ENCODE measurements at regions of chr10 and their contacts with region 1.

Region 1: GRCh38 chr10:22228943-22229801 is 11.4 kb upstream of the EBLN1 start:
- DNase-seq: peak; percentile 81 to 94
- ATAC-seq: peak; percentile 93 to 97
- H3K4me3 ChIP-seq: peak overlapping the region; percentile 64
- H3K27ac ChIP-seq: peak overlapping the region; percentile 78 to 88
- H3K4me1 ChIP-seq: peaks cover 6% of the 10 kb centered on the region; the same call in 2 of the 3 replicates
- CTCF ChIP-seq: no peak
- EP300 ChIP-seq: no peak
- POLR2A ChIP-seq: peak; percentile 29; the same call in 1 of the 2 replicates
- RAD21 ChIP-seq: peak in 1 of 2 experiments; percentile 18; a peak in 2 of 5 replicates

Region 2: GRCh38 chr10:22003079-22003913 is 225.9 kb before region 1 on chr10 and contains the start of gene DNAJC1:
- CTCF ChIA-PET with region 1: interaction called, 3 read pairs
- POLR2A ChIA-PET with region 1: interaction called, 15 read pairs
- DNase-seq: peak; percentile 91 to 96
- ATAC-seq: peak; percentile 95 to 99
- H3K4me3 ChIP-seq: peak within 1 kb of the TSS; percentile 76
- H3K27ac ChIP-seq: peak within 1 kb of the TSS; percentile 77 to 91
- H3K4me1 ChIP-seq: peaks cover 11% of the 10 kb centered on the region; the same call in 1 of the 3 replicates
- CTCF ChIP-seq: no peak
- EP300 ChIP-seq: no peak
- POLR2A ChIP-seq: peak; percentile 70
- RAD21 ChIP-seq: no peak; a peak in 1 of 5 replicates
- polyA plus RNA-seq, gene DNAJC1: 29.8 and 34.2 TPM in 2 replicates

Region 3: GRCh38 chr10:22148961-22149360 is 80.2 kb before region 1 on chr10:
- CTCF ChIA-PET with region 1: no interaction called
- POLR2A ChIA-PET with region 1: no interaction called
- DNase-seq: no peak
- ATAC-seq: no peak
- H3K4me3 ChIP-seq: no peak overlapping the region
- H3K27ac ChIP-seq: no peak overlapping the region
- H3K4me1 ChIP-seq: no peaks in the 10 kb centered on the region
- CTCF ChIP-seq: no peak
- EP300 ChIP-seq: no peak
- POLR2A ChIP-seq: no peak
- RAD21 ChIP-seq: no peak

Region 4: DNA sequence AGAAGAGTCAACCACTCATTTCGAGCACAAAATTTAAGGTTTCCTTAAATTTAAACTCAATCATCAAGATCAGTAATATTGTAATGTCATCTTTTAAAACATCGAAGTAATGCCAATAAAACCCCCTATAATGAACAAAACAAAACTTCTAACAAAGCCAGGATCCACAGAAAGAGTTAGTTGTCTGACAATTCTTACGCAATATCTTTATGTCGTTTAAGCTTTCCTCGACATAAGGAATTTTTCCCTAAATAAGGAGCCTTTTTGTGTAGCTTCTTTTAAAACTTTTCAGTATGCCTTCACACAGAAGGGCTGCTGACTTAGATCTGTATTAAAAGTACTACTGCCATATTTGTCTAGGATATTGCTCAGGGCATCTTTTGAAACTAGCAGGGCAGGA is 18.9 kb before region 1 on chr10:
- CTCF ChIA-PET with region 1: no interaction called
- POLR2A ChIA-PET with region 1: no interaction called
- DNase-seq: no peak
- ATAC-seq: no peak
- H3K4me3 ChIP-seq: no peak overlapping the region
- H3K27ac ChIP-seq: no peak overlapping the region
- H3K4me1 ChIP-seq: no peaks in the 10 kb centered on the region
- CTCF ChIP-seq: no peak
- EP300 ChIP-seq: no peak
- POLR2A ChIP-seq: no peak
- RAD21 ChIP-seq: no peak

Region 5: GRCh38 chr10:22244001-22244400 is 14.8 kb after region 1 on chr10:
- CTCF ChIA-PET with region 1: interaction called, 20 read pairs
- POLR2A ChIA-PET with region 1: interaction called, 22 read pairs
- DNase-seq: no peak
- ATAC-seq: no peak
- H3K4me3 ChIP-seq: no peak overlapping the region
- H3K27ac ChIP-seq: peak overlapping the region; percentile 18 to 89; a peak in 4 of 6 replicates
- H3K4me1 ChIP-seq: peaks cover 44% of the 10 kb centered on the region
- CTCF ChIP-seq: peak; percentile 20; the same call in 2 of the 3 replicates
- EP300 ChIP-seq: no peak
- POLR2A ChIP-seq: no peak
- RAD21 ChIP-seq: no peak

Region 6: DNA sequence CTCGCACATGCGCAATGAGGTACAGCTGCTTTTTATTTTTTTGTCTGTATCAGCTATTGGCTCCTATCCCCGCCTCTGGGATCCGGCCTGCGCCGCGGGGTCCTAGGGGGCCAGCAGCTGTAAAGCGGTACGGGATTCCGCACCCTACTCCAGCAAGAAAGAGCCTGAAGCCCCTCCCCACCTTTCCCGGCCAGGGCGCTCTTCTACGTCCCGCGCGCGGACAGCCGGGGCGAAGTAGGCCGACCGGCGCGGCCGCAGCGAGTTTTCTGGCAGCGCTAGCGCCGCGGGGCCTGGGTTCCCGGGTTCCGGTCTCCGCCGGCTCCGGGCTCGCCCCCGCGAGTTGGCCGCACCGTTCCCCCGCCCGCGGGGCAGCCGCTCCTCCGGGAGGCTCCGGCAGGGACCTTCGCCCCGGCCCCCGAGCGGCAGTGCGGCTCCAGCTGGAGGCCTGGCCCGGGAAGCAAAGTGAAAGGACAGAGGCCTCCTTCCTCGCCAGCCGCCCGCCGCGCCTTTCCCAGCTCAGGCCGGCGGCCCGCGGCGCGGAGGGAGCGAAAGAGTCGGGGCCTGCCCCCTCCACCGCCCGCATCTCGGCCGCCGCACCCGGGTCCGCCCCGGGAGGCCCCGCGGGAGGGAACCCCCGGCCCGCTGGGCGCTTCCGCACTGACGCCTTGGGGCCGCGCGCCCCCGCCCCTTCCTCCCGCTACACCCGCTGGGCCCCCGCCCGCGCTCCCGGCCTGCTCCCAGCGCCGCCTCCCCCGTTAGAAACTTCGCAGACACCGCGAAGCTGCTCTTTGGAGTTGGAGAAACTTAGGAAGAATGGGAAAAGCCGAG is 111.4 kb after region 1 on chr10:
- CTCF ChIA-PET with region 1: no interaction called
- POLR2A ChIA-PET with region 1: interaction called, 21 read pairs
- DNase-seq: peak; percentile 76 to 85
- ATAC-seq: peak; percentile 79 to 81
- H3K4me3 ChIP-seq: peak overlapping the region; percentile 73
- H3K27ac ChIP-seq: peak overlapping the region; percentile 92 to 99
- H3K4me1 ChIP-seq: peaks cover 15% of the 10 kb centered on the region; the same call in 1 of the 3 replicates
- CTCF ChIP-seq: 0 out of 3 replicates have a peak, but pooled peaks have one; percentile 2
- EP300 ChIP-seq: no peak
- POLR2A ChIP-seq: peak; percentile 40
- RAD21 ChIP-seq: no peak; a peak in 1 of 5 replicates

Region 7: DNA sequence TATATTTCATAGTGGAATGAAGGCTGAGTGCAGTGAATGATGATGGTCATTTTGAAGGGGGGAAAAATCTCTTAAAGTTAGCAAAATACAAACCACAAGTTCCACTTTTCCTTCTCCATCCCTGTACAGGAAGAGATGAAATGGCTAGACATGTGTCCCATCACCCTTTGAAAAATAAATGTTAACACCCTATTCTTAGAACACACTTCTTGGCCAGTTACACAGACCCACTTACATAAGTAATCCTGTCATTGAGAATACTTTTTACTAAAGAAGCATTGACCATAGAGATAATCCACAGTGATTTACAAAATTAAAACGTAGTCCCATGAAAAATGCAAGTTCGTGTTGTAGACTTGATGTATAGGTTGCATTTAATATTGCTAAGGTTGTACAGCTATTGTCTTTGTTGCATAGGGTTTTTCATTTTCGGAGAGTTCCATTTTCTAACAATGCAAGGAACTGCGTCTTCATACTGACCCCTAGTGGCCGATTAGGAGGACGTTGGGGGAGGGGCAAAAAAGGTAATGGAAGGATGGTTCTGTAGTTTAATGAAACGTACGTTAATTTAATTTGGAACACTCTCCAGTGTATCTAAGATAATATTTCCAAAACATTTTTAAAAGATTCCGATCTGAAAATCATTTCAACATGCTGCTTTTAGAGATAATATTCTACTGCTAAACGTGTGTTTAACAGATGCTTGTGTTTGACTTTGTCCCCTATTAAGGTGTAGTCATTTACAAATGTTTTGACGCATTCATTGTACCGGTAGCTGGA is 759.6 kb after region 1 on chr10:
- CTCF ChIA-PET with region 1: interaction called, 10 read pairs
- POLR2A ChIA-PET with region 1: no interaction called
- DNase-seq: peak; percentile 25 to 60
- ATAC-seq: peak; percentile 54 to 71; a peak in 3 of 6 replicates
- H3K4me3 ChIP-seq: no peak overlapping the region
- H3K27ac ChIP-seq: no peak overlapping the region
- H3K4me1 ChIP-seq: no peaks in the 10 kb centered on the region; the same call in 2 of the 3 replicates
- CTCF ChIP-seq: peak; percentile 95
- EP300 ChIP-seq: no peak
- POLR2A ChIP-seq: no peak
- RAD21 ChIP-seq: peak; percentile 95 to 96

Measured in A549 (cell line).